GM12878 (cell line): ENCODE measurements at regions of chr2 and their contacts with region 1.

Region 1: DNA sequence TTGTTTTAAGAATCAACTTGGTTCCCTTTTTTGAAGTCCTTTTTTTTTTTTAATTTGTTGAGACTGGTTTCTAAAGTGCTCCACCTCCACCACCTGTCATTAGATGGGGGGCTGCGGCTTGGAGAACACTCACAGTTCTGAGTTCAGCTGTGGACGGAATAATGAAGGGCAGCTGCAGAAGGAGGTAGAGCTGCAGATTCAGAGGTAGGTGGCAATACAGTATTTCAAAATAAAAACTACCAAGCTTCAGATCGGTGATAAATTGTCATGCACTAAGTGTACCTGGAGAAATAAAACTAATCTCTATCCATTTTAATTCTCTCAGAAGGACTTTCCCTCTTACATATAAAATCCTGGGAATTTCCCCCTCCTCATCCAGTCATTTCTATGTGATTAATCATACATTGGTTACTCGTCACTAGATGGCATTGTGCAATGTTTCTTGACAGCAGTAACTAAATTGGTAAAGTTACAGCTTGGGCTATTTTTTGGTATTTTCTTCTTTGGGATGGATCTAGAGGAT is 81.1 kb upstream of the SLC39A10 start:
- DNase-seq: no peak
- ATAC-seq: peak; percentile 87
- H3K4me3 ChIP-seq: no peak overlapping the region
- H3K27ac ChIP-seq: no peak overlapping the region
- H3K4me1 ChIP-seq: no peaks in the 10 kb centered on the region; the same call in 1 of the 2 replicates
- H3K27me3 ChIP-seq: no peaks in the 10 kb centered on the region
- CTCF ChIP-seq: peak in 2 of 3 experiments; percentile 12 to 60; a peak in 3 of 6 replicates
- EP300 ChIP-seq: no peak
- POLR2A ChIP-seq: no peak
- RAD21 ChIP-seq: peak; percentile 54

Region 2: DNA sequence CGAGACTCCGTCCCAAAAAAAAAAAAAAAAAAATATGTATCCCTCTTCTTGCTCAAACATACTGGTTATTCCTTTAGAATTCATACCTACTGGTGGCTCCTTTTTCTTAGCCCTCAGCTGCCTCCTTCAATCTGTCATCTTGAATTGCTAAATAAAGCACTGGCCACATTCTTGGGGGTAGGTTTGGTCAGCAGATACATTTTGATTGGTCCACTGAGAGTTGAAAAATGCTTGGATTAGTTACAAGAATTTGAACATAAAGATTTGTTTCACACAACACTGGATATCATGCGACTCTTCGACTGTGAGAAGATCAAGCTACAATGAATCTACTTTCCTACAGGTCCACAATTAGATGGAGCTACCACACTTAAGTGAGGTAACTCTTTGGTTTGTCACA is 825.0 kb before region 1 on chr2:
- CTCF ChIA-PET with region 1: no interaction called
- POLR2A ChIA-PET with region 1: no interaction called
- RAD21 ChIA-PET with region 1: no interaction called
- SMC1A ChIA-PET with region 1: no interaction called
- in situ Hi-C with region 1: no loop called
- intact Hi-C with region 1: no loop called
- DNase-seq: no peak
- ATAC-seq: no peak
- H3K4me3 ChIP-seq: no peak overlapping the region
- H3K27ac ChIP-seq: no peak overlapping the region
- H3K4me1 ChIP-seq: no peaks in the 10 kb centered on the region
- H3K27me3 ChIP-seq: no peaks in the 10 kb centered on the region
- CTCF ChIP-seq: no peak
- EP300 ChIP-seq: no peak
- POLR2A ChIP-seq: no peak
- RAD21 ChIP-seq: no peak

Region 3: GRCh38 chr2:195364015-195364965 is 211.7 kb before region 1 on chr2:
- CTCF ChIA-PET with region 1: no interaction called
- POLR2A ChIA-PET with region 1: no interaction called
- RAD21 ChIA-PET with region 1: no interaction called
- SMC1A ChIA-PET with region 1: no interaction called
- in situ Hi-C with region 1: no loop called
- intact Hi-C with region 1: no loop called
- DNase-seq: no peak
- ATAC-seq: no peak
- H3K4me3 ChIP-seq: no peak overlapping the region
- H3K27ac ChIP-seq: no peak overlapping the region
- H3K4me1 ChIP-seq: no peaks in the 10 kb centered on the region
- H3K27me3 ChIP-seq: no peaks in the 10 kb centered on the region
- CTCF ChIP-seq: no peak
- EP300 ChIP-seq: no peak
- POLR2A ChIP-seq: no peak
- RAD21 ChIP-seq: no peak

Region 4: DNA sequence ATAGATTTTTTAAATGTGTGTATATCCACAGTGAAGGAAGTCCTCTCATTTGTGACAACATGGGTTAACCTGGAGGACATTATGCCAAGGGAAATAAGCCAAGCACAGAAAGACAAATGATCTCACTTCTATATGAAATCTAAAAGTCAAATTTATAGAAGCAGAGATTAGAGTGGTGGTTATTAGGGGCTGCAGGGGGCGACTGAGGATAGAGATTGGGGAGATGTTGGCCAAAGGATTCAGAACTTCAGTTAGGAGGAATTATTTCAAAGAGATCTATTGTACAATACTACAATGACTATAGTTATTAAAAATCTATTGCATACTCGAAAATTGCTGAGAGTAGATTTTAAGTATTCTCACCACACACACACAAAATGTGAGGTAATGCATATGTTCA is 171.3 kb before region 1 on chr2:
- CTCF ChIA-PET with region 1: interaction called, 11 read pairs
- POLR2A ChIA-PET with region 1: no interaction called
- RAD21 ChIA-PET with region 1: interaction called, 3 read pairs
- SMC1A ChIA-PET with region 1: interaction called, 3 read pairs
- in situ Hi-C with region 1: no loop called
- intact Hi-C with region 1: no loop called
- DNase-seq: no peak
- ATAC-seq: no peak
- H3K4me3 ChIP-seq: no peak overlapping the region
- H3K27ac ChIP-seq: no peak overlapping the region
- H3K4me1 ChIP-seq: no peaks in the 10 kb centered on the region
- H3K27me3 ChIP-seq: no peaks in the 10 kb centered on the region
- CTCF ChIP-seq: no peak; a peak in 1 of 6 replicates
- EP300 ChIP-seq: no peak
- POLR2A ChIP-seq: no peak
- RAD21 ChIP-seq: peak; percentile 38; the same call in 1 of the 2 replicates

Region 5: DNA sequence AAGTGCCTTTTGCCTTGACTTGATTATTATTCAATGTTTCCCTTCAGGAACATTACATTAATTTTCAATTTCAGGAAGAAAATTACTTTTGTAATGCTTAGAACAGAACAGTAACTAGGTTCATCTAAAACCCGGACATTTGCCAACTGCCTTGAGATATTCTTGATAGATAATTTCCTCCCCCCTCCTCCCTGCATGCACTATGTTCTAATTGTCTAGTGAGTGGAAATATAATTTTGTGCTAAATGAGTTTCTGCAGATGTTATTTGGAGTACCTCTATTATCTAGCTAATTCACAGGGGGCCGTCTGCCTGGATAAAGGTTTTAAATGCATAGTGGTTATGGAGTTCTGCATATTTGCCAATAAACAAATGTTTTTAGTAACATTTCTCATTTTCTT is 119.2 kb before region 1 on chr2:
- CTCF ChIA-PET with region 1: no interaction called
- POLR2A ChIA-PET with region 1: no interaction called
- RAD21 ChIA-PET with region 1: no interaction called
- SMC1A ChIA-PET with region 1: no interaction called
- in situ Hi-C with region 1: no loop called
- intact Hi-C with region 1: no loop called
- DNase-seq: no peak
- ATAC-seq: no peak
- H3K4me3 ChIP-seq: no peak overlapping the region
- H3K27ac ChIP-seq: no peak overlapping the region
- H3K4me1 ChIP-seq: peaks cover 6% of the 10 kb centered on the region; the same call in 1 of the 2 replicates
- H3K27me3 ChIP-seq: no peaks in the 10 kb centered on the region
- CTCF ChIP-seq: no peak
- EP300 ChIP-seq: no peak
- POLR2A ChIP-seq: no peak
- RAD21 ChIP-seq: no peak

Region 6: GRCh38 chr2:195559431-195559914 is 16.5 kb before region 1 on chr2:
- CTCF ChIA-PET with region 1: interaction called, 65 read pairs
- POLR2A ChIA-PET with region 1: interaction called, 17 read pairs
- RAD21 ChIA-PET with region 1: interaction called, 34 read pairs
- SMC1A ChIA-PET with region 1: interaction called, 89 read pairs
- in situ Hi-C with region 1: no loop called
- intact Hi-C with region 1: no loop called
- DNase-seq: peak; percentile 99
- ATAC-seq: peak; percentile 72
- H3K4me3 ChIP-seq: 0 out of 2 replicates have a peak overlapping the region, but pooled peaks have one; percentile 6
- H3K27ac ChIP-seq: peak overlapping the region; percentile 94
- H3K4me1 ChIP-seq: peaks cover 39% of the 10 kb centered on the region
- H3K27me3 ChIP-seq: no peaks in the 10 kb centered on the region
- CTCF ChIP-seq: no peak
- EP300 ChIP-seq: peak; percentile 88 to 97
- POLR2A ChIP-seq: no peak
- RAD21 ChIP-seq: 0 out of 2 replicates have a peak, but pooled peaks have one; percentile 15

Region 7: GRCh38 chr2:195592105-195592504 is 16.2 kb after region 1 on chr2:
- CTCF ChIA-PET with region 1: interaction called, 25 read pairs
- POLR2A ChIA-PET with region 1: no interaction called
- RAD21 ChIA-PET with region 1: interaction called, 7 read pairs
- SMC1A ChIA-PET with region 1: interaction called, 17 read pairs
- in situ Hi-C with region 1: no loop called
- intact Hi-C with region 1: no loop called
- DNase-seq: no peak
- ATAC-seq: no peak
- H3K4me3 ChIP-seq: no peak overlapping the region
- H3K27ac ChIP-seq: no peak overlapping the region
- H3K4me1 ChIP-seq: no peaks in the 10 kb centered on the region
- H3K27me3 ChIP-seq: no peaks in the 10 kb centered on the region
- CTCF ChIP-seq: no peak
- EP300 ChIP-seq: no peak
- POLR2A ChIP-seq: no peak
- RAD21 ChIP-seq: no peak

Region 8: GRCh38 chr2:195649629-195650190 is 73.8 kb after region 1 on chr2:
- CTCF ChIA-PET with region 1: interaction called, 55 read pairs
- POLR2A ChIA-PET with region 1: interaction called, 6 read pairs
- RAD21 ChIA-PET with region 1: interaction called, 19 read pairs
- SMC1A ChIA-PET with region 1: interaction called, 45 read pairs
- in situ Hi-C with region 1: no loop called
- intact Hi-C with region 1: no loop called
- DNase-seq: no peak
- ATAC-seq: peak; percentile 47
- H3K4me3 ChIP-seq: peak overlapping the region; percentile 17; the same call in 1 of the 2 replicates
- H3K27ac ChIP-seq: peak overlapping the region; percentile 80
- H3K4me1 ChIP-seq: peaks cover 20% of the 10 kb centered on the region
- H3K27me3 ChIP-seq: no peaks in the 10 kb centered on the region
- CTCF ChIP-seq: no peak
- EP300 ChIP-seq: no peak; a peak in 1 of 4 replicates
- POLR2A ChIP-seq: no peak
- RAD21 ChIP-seq: no peak

Region 9: GRCh38 chr2:195672668-195673067 is 96.7 kb after region 1 on chr2:
- CTCF ChIA-PET with region 1: interaction called, 51 read pairs
- POLR2A ChIA-PET with region 1: no interaction called
- RAD21 ChIA-PET with region 1: interaction called, 12 read pairs
- SMC1A ChIA-PET with region 1: interaction called, 13 read pairs
- in situ Hi-C with region 1: no loop called
- intact Hi-C with region 1: no loop called
- DNase-seq: no peak
- ATAC-seq: no peak
- H3K4me3 ChIP-seq: no peak overlapping the region
- H3K27ac ChIP-seq: no peak overlapping the region
- H3K4me1 ChIP-seq: no peaks in the 10 kb centered on the region
- H3K27me3 ChIP-seq: no peaks in the 10 kb centered on the region
- CTCF ChIP-seq: peak in 2 of 3 experiments; percentile 15 to 22; a peak in 2 of 6 replicates
- EP300 ChIP-seq: no peak
- POLR2A ChIP-seq: no peak
- RAD21 ChIP-seq: no peak